Activated CD4-positive, alpha-beta memory T cell treated with anti-CD3 and anti-CD28 coated beads for 36 hours (primary cell): ENCODE measurements at regions of chr10 and their contacts with region 1.

Region 1: DNA sequence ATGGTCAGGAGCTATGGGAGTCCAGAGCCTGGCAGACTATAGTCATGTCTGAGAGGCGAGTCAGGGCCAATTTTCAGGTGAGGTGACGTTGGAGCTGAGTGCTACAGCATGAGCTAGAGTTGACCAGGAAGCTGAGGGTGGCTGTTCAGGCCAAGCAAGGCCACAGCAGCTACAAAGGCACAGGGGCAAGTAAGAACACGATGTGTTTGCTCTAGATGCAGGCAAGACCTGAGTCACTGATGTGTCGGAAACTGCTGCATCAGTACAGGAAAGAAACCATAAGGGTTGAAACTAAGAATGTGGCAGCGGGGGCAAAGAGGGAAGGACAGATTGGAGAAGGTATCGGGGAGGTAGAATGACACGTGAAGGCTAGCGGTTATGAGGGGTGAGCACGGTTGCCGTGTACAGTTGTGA is 11.8 kb upstream of the RRP12 start:
- DNase-seq: peak; percentile 90
- H3K4me3 Mint-ChIP-seq: peak overlapping the region; percentile 59
- H3K27ac Mint-ChIP-seq: peak overlapping the region; percentile 92
- H3K4me1 Mint-ChIP-seq: peaks cover 55% of the 10 kb centered on the region
- H3K27me3 Mint-ChIP-seq: no peaks in the 10 kb centered on the region

Region 2: DNA sequence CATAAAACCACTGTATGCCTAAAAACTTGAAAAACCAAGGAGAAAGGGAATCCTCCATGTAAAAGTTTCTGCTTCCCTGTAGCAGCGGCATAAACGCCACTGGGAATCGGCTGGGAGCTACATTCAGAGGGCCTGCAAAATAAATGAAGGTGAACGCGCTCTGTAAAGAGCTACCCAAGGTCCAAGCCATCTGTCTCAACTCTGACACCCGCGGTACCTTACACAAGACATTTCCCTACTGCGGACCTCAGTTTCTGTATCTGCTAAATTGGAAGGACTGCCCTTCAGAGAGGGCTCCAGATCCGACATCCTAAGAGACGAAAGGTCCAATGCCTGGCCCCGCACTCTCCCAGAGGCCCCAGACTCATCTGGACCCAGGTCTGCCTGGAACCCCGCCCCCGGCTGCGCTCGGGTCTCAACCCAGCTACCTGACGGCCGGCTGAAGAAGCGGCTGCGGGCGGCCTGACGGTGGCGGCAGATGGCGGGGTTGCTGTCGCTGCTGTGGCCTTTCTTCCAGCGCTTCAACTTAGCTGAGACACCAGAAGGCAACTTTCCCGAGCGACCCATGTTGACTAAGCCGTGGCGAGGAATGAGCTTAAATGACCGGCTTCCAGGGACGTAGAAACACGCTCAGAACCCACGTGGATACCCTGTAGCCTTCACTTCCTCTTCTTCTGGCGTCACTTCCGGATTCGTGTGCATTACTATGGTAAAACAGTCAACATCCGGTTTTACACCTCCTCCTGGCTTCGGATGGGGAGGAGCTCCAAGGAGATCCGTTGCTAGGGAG is 12.0 kb before region 1 on chr10 and contains the start of gene RRP12:
- CTCF ChIA-PET with region 1: interaction called, 194 read pairs
- POLR2A ChIA-PET with region 1: interaction called, 48 read pairs
- intact Hi-C with region 1: no loop called
- DNase-seq: peak; percentile 88
- H3K4me3 Mint-ChIP-seq: peak within 1 kb of the TSS; percentile 93
- H3K27ac Mint-ChIP-seq: peak within 1 kb of the TSS; percentile 88
- H3K4me1 Mint-ChIP-seq: peaks cover 10% of the 10 kb centered on the region
- H3K27me3 Mint-ChIP-seq: no peaks in the 10 kb centered on the region
- total RNA-seq, gene RRP12: 40.4 to 41.8 TPM

Region 3: GRCh38 chr10:97434055-97434454 is 21.2 kb after region 1 on chr10:
- CTCF ChIA-PET with region 1: interaction called, 23 read pairs
- POLR2A ChIA-PET with region 1: interaction called, 326 read pairs
- intact Hi-C with region 1: no loop called
- DNase-seq: no peak
- H3K4me3 Mint-ChIP-seq: no peak overlapping the region
- H3K27ac Mint-ChIP-seq: peak overlapping the region; percentile 86
- H3K4me1 Mint-ChIP-seq: peaks cover 23% of the 10 kb centered on the region
- H3K27me3 Mint-ChIP-seq: no peaks in the 10 kb centered on the region